Activated CD8-positive, alpha-beta T cell treated with anti-CD3 and anti-CD28 coated beads for 36 hours (primary cell): ENCODE measurements at regions of chr12 and their contacts with region 1.

Region 1: DNA sequence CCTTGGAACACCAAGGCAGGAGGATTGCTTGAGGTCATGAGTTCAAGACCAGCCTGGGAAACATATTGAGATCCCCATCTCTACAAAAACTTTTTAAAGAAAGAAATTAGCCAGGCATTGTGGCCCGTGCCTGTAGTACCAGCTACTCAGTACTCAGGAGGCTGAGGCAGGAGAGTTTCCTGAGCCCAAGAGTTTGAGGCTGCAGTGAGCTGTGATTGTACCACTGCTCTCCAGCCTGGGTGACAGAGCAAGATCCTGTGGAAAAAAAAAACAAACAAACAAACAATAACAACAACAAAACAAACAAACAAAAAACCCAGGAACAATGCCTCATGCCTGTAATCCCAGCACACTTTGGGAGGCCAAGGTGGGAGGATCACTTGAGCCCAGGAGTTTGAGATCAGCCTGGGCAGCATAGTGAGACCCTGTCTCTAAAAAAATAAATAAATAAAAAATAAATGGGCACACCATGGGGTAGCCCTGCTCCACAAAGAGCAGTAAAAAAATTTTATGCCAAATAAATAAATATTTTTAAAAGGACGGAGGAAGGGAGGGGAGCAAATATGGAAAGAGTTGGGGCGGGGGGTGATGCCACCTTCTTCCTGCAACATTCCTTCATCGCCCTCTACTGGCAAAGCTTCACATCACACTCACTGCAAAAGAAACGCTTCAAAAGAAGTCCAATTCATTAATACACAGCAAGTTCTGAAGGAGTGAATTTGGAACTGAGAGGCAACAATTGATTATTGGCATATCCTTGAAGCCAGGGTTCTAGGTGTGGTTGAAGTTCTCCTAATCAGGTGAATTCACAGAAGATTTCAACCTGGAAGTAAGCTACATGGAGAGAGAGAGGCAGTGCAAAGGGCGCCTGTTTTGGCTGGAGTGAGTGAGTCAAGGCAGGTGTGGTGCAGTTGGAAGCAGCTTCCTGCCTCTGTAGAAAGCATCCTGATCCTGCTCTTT is 8.8 kb upstream of the GNPTAB start:
- DNase-seq: peak; percentile 82
- ATAC-seq: peak; percentile 79
- H3K4me3 Mint-ChIP-seq: no peak overlapping the region
- H3K27ac Mint-ChIP-seq: no peak overlapping the region
- H3K4me1 Mint-ChIP-seq: peaks cover 8% of the 10 kb centered on the region
- H3K27me3 Mint-ChIP-seq: no peaks in the 10 kb centered on the region
- CTCF ChIP-seq: peak; percentile 96

Region 2: DNA sequence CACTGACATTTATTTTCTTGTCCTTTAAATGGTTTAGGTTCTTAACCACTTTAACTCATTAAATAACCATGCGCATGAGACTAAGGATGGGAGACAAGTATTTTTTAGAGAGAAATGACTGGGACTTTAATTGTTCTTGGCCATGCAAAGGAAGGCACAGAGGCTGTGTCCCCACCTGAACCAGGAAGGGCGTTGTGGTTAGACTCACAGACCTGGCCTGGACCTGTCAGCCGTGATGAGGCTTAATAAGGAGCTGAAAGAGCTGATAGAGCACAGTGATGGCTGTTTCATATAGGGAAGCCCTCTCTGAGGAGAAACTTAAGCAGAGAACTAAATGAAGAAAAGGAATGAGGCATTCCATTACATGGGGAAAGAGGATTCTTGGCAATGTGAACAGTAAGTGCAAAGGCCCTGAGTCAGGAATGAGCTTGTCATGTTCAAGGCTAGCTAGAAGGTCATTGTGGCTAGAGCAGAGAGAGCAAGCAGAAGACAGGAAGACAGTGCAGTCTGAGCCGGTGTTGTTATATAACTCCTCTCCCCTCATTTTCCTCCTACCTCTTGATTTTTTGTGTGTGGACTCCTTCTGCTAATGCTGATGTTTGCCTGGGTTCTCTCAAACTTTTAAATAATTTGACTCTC is 1119.5 kb before region 1 on chr12:
- CTCF ChIA-PET with region 1: no interaction called
- POLR2A ChIA-PET with region 1: no interaction called
- intact Hi-C with region 1: no loop called
- DNase-seq: no peak
- ATAC-seq: no peak
- H3K4me3 Mint-ChIP-seq: no peak overlapping the region
- H3K27ac Mint-ChIP-seq: no peak overlapping the region
- H3K4me1 Mint-ChIP-seq: no peaks in the 10 kb centered on the region
- H3K27me3 Mint-ChIP-seq: peaks cover 27% of the 10 kb centered on the region
- CTCF ChIP-seq: no peak

Region 3: DNA sequence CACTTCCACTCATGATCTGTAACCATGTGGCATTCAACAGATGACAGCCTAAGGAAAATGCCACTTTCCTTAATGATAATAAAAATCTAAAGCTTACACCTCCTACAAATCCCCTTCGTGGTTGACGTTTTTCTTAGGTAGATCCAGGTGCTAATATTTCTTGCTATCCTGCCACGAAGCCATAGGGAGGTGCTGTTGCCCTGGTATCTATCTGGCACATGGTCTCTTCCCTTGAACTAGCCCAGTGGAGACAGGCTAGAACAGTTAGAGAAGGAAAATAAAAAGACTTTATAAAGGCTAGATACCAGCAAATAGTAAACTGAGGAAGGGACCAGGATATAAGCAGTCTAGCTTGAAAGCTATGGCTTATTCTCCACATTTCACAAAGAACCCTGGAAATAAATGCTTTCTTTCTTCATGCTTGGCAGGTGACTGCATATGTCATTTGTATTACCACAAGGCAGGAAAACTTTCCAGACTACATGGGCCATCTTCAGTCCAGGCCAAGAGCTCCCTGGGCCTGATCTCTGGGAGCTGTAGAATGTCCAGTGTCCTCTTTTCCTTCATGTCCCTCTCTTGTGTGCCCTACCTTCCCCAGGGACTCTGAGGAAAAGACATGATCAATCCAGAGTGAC is 349.2 kb before region 1 on chr12:
- CTCF ChIA-PET with region 1: interaction called, 3 read pairs
- POLR2A ChIA-PET with region 1: no interaction called
- intact Hi-C with region 1: loop called (anchors 10 kb)
- DNase-seq: peak; percentile 35
- ATAC-seq: peak; percentile 49
- H3K4me3 Mint-ChIP-seq: no peak overlapping the region
- H3K27ac Mint-ChIP-seq: no peak overlapping the region
- H3K4me1 Mint-ChIP-seq: no peaks in the 10 kb centered on the region
- H3K27me3 Mint-ChIP-seq: peaks cover 15% of the 10 kb centered on the region
- CTCF ChIP-seq: peak; percentile 54

Region 4: GRCh38 chr12:101773650-101774162 is 65.9 kb before region 1 on chr12:
- CTCF ChIA-PET with region 1: interaction called, 199 read pairs
- POLR2A ChIA-PET with region 1: interaction called, 4 read pairs
- intact Hi-C with region 1: loop called (anchors 1 kb)
- DNase-seq: peak; percentile 72
- ATAC-seq: peak; percentile 95
- H3K4me3 Mint-ChIP-seq: no peak overlapping the region
- H3K27ac Mint-ChIP-seq: no peak overlapping the region
- H3K4me1 Mint-ChIP-seq: peaks cover 4% of the 10 kb centered on the region
- H3K27me3 Mint-ChIP-seq: no peaks in the 10 kb centered on the region
- CTCF ChIP-seq: peak; percentile 86

Region 5: GRCh38 chr12:101792051-101792931 is 47.3 kb before region 1 on chr12:
- CTCF ChIA-PET with region 1: interaction called, 34 read pairs
- POLR2A ChIA-PET with region 1: no interaction called
- intact Hi-C with region 1: no loop called
- DNase-seq: no peak
- ATAC-seq: no peak
- H3K4me3 Mint-ChIP-seq: no peak overlapping the region
- H3K27ac Mint-ChIP-seq: peak overlapping the region; percentile 83
- H3K4me1 Mint-ChIP-seq: peaks cover 45% of the 10 kb centered on the region
- H3K27me3 Mint-ChIP-seq: no peaks in the 10 kb centered on the region
- CTCF ChIP-seq: no peak

Region 6: GRCh38 chr12:101854747-101855146 is 15.1 kb after region 1 on chr12:
- CTCF ChIA-PET with region 1: interaction called, 16 read pairs
- POLR2A ChIA-PET with region 1: no interaction called
- intact Hi-C with region 1: no loop called
- DNase-seq: no peak
- ATAC-seq: peak; percentile 22
- H3K4me3 Mint-ChIP-seq: no peak overlapping the region
- H3K27ac Mint-ChIP-seq: no peak overlapping the region
- H3K4me1 Mint-ChIP-seq: peaks cover 13% of the 10 kb centered on the region
- H3K27me3 Mint-ChIP-seq: no peaks in the 10 kb centered on the region
- CTCF ChIP-seq: no peak

Region 7: GRCh38 chr12:101891462-101892273 is 52.1 kb after region 1 on chr12:
- CTCF ChIA-PET with region 1: no interaction called
- POLR2A ChIA-PET with region 1: no interaction called
- intact Hi-C with region 1: no loop called
- DNase-seq: no peak
- ATAC-seq: no peak
- H3K4me3 Mint-ChIP-seq: no peak overlapping the region
- H3K27ac Mint-ChIP-seq: no peak overlapping the region
- H3K4me1 Mint-ChIP-seq: no peaks in the 10 kb centered on the region
- H3K27me3 Mint-ChIP-seq: no peaks in the 10 kb centered on the region
- CTCF ChIP-seq: no peak